Caco-2 (cell line): ENCODE measurements at regions of chr1 and their contacts with region 1.

Region 1: GRCh38 chr1:73452522-73452921 is 745.5 kb downstream of the LRRIQ3 start:
- DNase-seq: no peak
- H3K4me3 ChIP-seq: no peak overlapping the region
- H3K4me3 Mint-ChIP-seq: no peak overlapping the region
- H3K27ac Mint-ChIP-seq: no peak overlapping the region
- H3K4me1 ChIP-seq: no peaks in the 10 kb centered on the region
- H3K4me1 Mint-ChIP-seq: no peaks in the 10 kb centered on the region
- H3K27me3 ChIP-seq: no peaks in the 10 kb centered on the region
- H3K27me3 Mint-ChIP-seq: no peaks in the 10 kb centered on the region
- CTCF ChIP-seq: no peak

Region 2: GRCh38 chr1:73627723-73628122 is 175.2 kb after region 1 on chr1:
- CTCF ChIA-PET with region 1: no interaction called
- POLR2A ChIA-PET with region 1: no interaction called
- intact Hi-C with region 1: loop called (anchors 2 kb)
- DNase-seq: no peak
- H3K4me3 ChIP-seq: no peak overlapping the region
- H3K4me3 Mint-ChIP-seq: no peak overlapping the region
- H3K27ac Mint-ChIP-seq: no peak overlapping the region
- H3K4me1 ChIP-seq: no peaks in the 10 kb centered on the region
- H3K4me1 Mint-ChIP-seq: no peaks in the 10 kb centered on the region
- H3K27me3 ChIP-seq: no peaks in the 10 kb centered on the region
- H3K27me3 Mint-ChIP-seq: peaks cover 2% of the 10 kb centered on the region
- CTCF ChIP-seq: no peak